Heart left ventricle (tissue), 16 donors: ENCODE measurements at regions of chr11 and their contacts with region 1.

Region 1: GRCh38 chr11:65569973-65570918 is at the start of gene ZNRD2:
- DNase-seq: peak; percentile 98 to 99 (median 99)
- ATAC-seq: peak; percentile 85 to 92 (median 90)
- H3K4me3 ChIP-seq: peak within 1 kb of the TSS; percentile 56 to 96 (median 82)
- H3K27ac ChIP-seq: peak within 1 kb of the TSS; percentile 64 to 99 (median 95)
- H3K4me1 ChIP-seq: peaks cover 17 to 77% (median 55%) of the 10 kb centered on the region in 12 donors
- H3K27me3 ChIP-seq: peaks cover 0 to 6% (median 0%) of the 10 kb centered on the region in 9 donors
- CTCF ChIP-seq: peak in 11 of 12 donors; percentile 33 to 71 (median 55)
- POLR2A ChIP-seq: peak in 1 of 2 donors; percentile 72
- total RNA-seq, gene ZNRD2: 23.2 to 63.6 (median 33.9) TPM

Region 2: GRCh38 chr11:65588199-65589054 is 18.2 kb after region 1 on chr11:
- intact Hi-C with region 1: loop called in 2 of 10 experiments (anchors 2 kb)
- DNase-seq: peak in 4 of 5 donors; percentile 70 to 79 (median 76)
- ATAC-seq: peak; percentile 57 to 77 (median 71)
- H3K4me3 ChIP-seq: peak overlapping the region in 1 of 12 donors; percentile 26
- H3K27ac ChIP-seq: peak overlapping the region; percentile 21 to 90 (median 83)
- H3K4me1 ChIP-seq: peaks cover 6 to 75% (median 54%) of the 10 kb centered on the region in 12 donors
- H3K27me3 ChIP-seq: no peaks in the 10 kb centered on the region
- CTCF ChIP-seq: peak; percentile 36 to 66 (median 54)
- POLR2A ChIP-seq: no peak